Activated naive CD4-positive, alpha-beta T cell treated with anti-CD3 and anti-CD28 coated beads for 36 hours (primary cell): ENCODE measurements at regions of chr5 and their contacts with region 1.

Region 1: DNA sequence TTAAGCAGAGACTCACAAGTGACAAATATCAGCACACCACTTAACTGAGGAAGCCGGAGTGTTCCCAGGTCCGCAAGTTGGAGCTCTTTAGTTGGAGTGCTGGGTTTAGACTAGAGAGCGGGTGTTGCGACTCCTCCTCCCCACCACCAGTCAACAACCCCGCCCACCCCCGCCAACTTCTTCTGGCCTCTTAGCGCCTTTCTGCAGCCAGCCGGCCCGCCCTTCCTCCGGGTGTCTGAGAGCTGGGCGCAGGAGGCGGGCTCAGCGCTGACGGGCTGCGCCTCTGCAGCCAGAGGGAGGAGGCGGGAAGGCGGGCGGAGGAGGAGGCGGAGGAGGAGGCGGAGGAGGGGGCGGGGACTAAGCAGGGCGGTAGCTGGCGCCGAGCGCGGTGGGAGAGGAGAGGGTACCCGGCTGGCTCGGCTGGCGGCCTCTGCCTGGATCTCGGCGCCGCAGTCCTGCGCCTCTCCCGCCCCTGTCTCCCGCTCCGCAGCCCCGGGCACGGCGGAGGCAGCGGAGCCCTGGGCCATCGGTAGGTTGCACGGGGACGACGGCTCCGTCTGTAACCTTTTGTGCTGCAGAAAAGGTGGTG is at the start of gene MACIR:
- DNase-seq: peak; percentile 97
- H3K4me3 Mint-ChIP-seq: peak within 1 kb of the TSS; percentile 90
- H3K27ac Mint-ChIP-seq: peak within 1 kb of the TSS; percentile 63
- H3K4me1 Mint-ChIP-seq: peaks cover 25% of the 10 kb centered on the region
- H3K27me3 Mint-ChIP-seq: peaks cover 3% of the 10 kb centered on the region
- total RNA-seq, gene MACIR: 5.5 TPM

Region 2: GRCh38 chr5:102755686-102756371 is 502.6 kb before region 1 on chr5:
- CTCF ChIA-PET with region 1: no interaction called
- intact Hi-C with region 1: loop called (anchors 2 kb)
- DNase-seq: peak; percentile 88
- H3K4me3 Mint-ChIP-seq: peak overlapping the region; percentile 93
- H3K27ac Mint-ChIP-seq: peak overlapping the region; percentile 93
- H3K4me1 Mint-ChIP-seq: peaks cover 52% of the 10 kb centered on the region
- H3K27me3 Mint-ChIP-seq: peaks cover 17% of the 10 kb centered on the region

Region 3: DNA sequence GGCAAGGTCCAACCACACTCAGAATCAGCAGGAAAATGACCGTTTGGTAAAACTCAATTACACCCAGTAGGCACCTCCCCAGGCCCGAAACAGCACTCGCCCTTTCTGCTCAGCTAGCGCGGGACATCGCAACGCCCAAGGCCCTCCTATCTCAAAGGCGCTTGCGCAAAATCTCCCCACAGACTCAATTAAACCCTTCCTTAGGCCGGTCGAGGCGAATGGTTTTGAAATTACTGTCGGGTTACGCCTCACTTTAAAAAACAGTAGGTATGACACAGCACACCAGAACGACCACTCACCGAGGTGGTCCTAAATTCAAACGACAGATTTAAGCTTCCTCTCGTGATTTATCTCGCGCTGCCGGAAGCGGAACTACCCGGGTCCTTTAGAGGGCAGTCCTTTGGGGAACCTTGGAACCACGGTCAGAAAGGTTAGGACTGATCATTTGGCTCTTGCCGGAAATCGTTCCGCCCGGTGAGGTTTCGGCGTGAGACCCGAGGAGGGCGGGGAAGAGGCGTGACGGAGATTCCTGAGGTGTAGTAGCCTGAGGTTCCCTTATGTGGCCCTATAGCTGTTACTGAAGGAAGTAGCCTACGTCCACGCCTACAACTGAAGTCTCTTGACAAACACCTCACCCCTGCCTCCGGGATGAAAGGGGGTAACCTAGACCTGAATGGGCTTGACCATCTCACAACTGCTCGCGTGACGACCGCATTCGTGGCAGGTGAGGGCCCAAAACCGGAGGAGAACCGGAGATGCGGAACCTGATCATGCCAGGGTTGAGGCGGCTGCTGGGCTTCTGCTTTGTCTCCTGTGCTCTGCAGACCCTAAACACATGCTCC is 138.5 kb before region 1 on chr5 and contains the starts of genes GIN1 and PPIP5K2:
- CTCF ChIA-PET with region 1: no interaction called
- intact Hi-C with region 1: loop called (anchors 1 kb)
- DNase-seq: peak; percentile 98
- H3K4me3 Mint-ChIP-seq: peak within 1 kb of the TSS; percentile 96
- H3K27ac Mint-ChIP-seq: peak within 1 kb of the TSS; percentile 100
- H3K4me1 Mint-ChIP-seq: peaks cover 38% of the 10 kb centered on the region
- H3K27me3 Mint-ChIP-seq: no peaks in the 10 kb centered on the region
- total RNA-seq, gene GIN1: 11.0 to 13.0 TPM
- total RNA-seq, gene PPIP5K2: 35.8 to 45.0 TPM

Region 4: DNA sequence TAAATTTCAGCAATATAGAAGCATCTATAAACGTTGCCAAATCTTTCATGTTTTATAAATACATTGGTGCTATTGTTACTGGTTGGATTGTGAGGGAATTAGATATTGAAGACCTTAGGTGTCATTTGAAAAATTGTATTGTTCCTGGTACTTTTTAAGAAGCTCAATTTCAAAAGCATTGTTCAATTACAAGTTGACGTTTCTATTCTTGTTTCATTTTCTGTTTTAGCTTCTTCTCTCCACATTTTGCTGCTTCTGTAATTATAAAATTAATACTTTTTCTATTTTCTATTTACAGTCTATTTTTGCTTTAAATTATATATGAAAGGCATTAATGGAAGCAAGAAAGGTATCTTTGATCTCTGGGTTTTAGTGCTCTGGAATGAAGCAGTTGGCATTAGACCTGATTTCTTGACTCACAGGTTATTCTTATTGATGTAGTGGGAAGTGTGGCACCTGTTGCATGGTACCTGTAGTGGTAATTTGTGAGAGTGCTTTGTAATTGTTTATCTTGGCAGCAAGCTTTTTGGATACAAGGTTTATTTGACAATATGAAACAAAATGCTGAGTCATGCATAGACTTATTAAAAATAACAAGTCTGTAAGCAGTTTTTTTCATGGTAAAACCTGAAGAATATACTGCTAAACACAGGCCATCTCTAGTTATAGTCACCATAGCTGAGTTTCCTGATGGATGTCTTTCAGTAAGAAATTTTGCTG is 13.3 kb after region 1 on chr5:
- CTCF ChIA-PET with region 1: interaction called, 3 read pairs
- intact Hi-C with region 1: loop called (anchors 1 kb)
- DNase-seq: no peak
- H3K4me3 Mint-ChIP-seq: no peak overlapping the region
- H3K27ac Mint-ChIP-seq: no peak overlapping the region
- H3K4me1 Mint-ChIP-seq: peaks cover 8% of the 10 kb centered on the region
- H3K27me3 Mint-ChIP-seq: no peaks in the 10 kb centered on the region

Region 5: DNA sequence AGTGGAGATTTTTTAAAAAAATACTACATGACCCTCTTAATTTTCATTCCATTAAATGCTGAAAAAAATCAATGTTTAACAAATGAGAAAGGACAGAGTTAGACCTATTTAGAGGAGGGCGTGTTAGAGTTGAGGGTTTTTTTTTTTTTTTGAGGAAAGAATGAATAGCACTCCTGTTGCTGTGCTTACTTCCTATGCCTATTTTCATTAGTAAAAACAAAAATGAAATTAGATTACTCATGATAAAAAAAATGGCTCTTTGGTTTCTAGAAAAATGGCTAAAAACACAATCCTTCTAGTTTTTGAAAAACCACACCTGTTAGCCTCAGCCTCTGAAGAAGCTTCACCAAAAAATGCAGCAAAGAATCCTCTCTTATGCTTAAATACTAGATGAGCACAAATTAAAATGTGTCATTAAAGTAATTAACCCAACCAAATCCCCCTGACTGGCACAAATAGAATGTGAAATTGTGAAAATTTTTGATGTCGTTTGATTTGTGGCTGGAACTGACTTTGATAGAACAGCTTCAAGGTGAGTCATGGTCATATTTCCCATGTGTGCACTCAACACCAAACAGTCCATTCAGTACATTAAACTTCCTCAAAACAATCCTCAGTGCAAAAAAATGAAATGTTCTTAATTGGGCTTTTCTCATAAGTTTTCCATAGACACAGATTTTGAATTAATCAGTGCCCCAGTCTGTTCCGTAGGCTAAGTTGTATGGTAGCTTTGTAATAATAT is 98.1 kb after region 1 on chr5:
- CTCF ChIA-PET with region 1: interaction called, 3 read pairs
- intact Hi-C with region 1: loop called (anchors 2 kb)
- DNase-seq: no peak
- H3K4me3 Mint-ChIP-seq: no peak overlapping the region
- H3K27ac Mint-ChIP-seq: peak overlapping the region; percentile 34
- H3K4me1 Mint-ChIP-seq: peaks cover 8% of the 10 kb centered on the region
- H3K27me3 Mint-ChIP-seq: peaks cover 10% of the 10 kb centered on the region

Region 6: GRCh38 chr5:103562453-103563157 is 304.1 kb after region 1 on chr5 and contains the start of gene NUDT12:
- CTCF ChIA-PET with region 1: no interaction called
- intact Hi-C with region 1: loop called (anchors 1 kb)
- DNase-seq: peak; percentile 69
- H3K4me3 Mint-ChIP-seq: peak within 1 kb of the TSS; percentile 87
- H3K27ac Mint-ChIP-seq: peak within 1 kb of the TSS; percentile 71
- H3K4me1 Mint-ChIP-seq: peaks cover 16% of the 10 kb centered on the region
- H3K27me3 Mint-ChIP-seq: no peaks in the 10 kb centered on the region
- total RNA-seq, gene NUDT12: 4.0 to 4.7 TPM

Region 7: GRCh38 chr5:104295991-104296390 is 1037.5 kb after region 1 on chr5:
- CTCF ChIA-PET with region 1: no interaction called
- intact Hi-C with region 1: no loop called
- DNase-seq: no peak
- H3K4me3 Mint-ChIP-seq: no peak overlapping the region
- H3K27ac Mint-ChIP-seq: no peak overlapping the region
- H3K4me1 Mint-ChIP-seq: no peaks in the 10 kb centered on the region
- H3K27me3 Mint-ChIP-seq: no peaks in the 10 kb centered on the region